ENCODE measurements at regions of chr1 and their contacts with region 1.

Region 1: DNA sequence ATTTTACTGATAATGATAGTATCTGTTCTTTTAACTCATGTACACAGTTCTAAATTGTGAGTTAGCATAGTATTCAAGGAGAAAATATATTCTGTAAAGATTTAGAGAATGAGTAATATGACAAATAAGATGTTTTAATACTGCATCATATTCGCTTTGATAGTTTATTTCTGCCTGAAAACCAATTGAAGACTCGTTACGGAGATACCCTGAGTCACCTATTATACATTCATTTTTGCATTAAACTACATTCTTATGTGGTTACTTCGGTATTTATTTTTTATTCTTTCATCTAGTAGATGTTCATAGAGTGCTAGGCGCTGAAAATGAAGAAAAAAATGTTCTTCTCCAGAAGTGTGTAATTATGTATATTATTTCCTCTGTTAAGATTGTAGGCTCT is 5.3 kb downstream of the UHMK1 start:
- DNase-seq: no peak
- H3K4me3 ChIP-seq: no peak overlapping the region
- H3K27ac ChIP-seq: no peak overlapping the region
- H3K4me1 ChIP-seq: 0 out of 2 replicates have a peak, but pooled peaks cover 6% of the 10 kb centered on the region
- H3K27me3 ChIP-seq: no peaks in the 10 kb centered on the region
- CTCF ChIP-seq: no peak

Region 2: DNA sequence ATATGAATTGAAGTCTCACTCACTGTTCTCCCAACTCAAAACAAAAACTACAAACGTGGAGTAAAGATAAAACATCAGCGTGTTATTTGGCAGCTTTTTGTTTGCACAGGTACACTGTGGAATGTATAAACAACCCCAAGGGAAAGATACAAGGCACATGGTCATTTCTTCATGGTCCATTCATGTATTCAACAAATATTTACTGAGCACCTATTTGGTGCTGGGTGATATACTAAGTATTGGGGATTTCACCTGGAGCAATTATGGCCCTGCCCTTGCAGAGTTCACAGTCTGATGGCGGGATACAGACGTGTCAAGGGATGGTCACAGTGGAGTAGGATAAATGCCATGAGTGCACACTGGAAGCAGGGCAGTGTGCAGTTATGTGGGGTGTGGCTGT is 262.4 kb before region 1 on chr1:
- CTCF ChIA-PET with region 1: no interaction called
- POLR2A ChIA-PET with region 1: no interaction called
- intact Hi-C with region 1: no loop called
- DNase-seq: no peak
- H3K4me3 ChIP-seq: no peak overlapping the region
- H3K27ac ChIP-seq: no peak overlapping the region
- H3K4me1 ChIP-seq: no peaks in the 10 kb centered on the region
- H3K27me3 ChIP-seq: no peaks in the 10 kb centered on the region
- CTCF ChIP-seq: no peak

Region 3: GRCh38 chr1:162265983-162266382 is 236.9 kb before region 1 on chr1:
- CTCF ChIA-PET with region 1: no interaction called
- POLR2A ChIA-PET with region 1: no interaction called
- intact Hi-C with region 1: no loop called
- DNase-seq: no peak
- H3K4me3 ChIP-seq: no peak overlapping the region
- H3K27ac ChIP-seq: no peak overlapping the region
- H3K4me1 ChIP-seq: no peaks in the 10 kb centered on the region
- H3K27me3 ChIP-seq: no peaks in the 10 kb centered on the region
- CTCF ChIP-seq: no peak

Region 4: DNA sequence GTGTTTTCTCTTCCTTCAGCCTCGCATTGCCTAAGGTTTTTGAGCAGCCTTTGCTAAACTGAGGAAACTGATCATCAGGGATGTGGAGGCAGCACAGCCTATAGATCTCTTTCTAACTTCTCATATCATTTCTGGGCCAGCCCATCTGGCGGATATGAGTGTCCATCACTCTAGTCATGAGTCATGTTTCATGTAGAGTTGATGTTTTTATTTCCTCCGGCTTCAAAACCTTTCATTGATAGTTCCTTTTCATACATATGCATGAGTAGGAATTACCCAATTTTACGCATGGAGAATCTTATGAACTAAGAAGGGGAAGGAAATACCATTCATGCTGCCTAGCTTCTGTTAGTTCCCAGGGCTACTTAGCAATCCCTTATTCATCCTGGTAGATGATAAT is 192.6 kb before region 1 on chr1:
- CTCF ChIA-PET with region 1: no interaction called
- POLR2A ChIA-PET with region 1: no interaction called
- intact Hi-C with region 1: no loop called
- DNase-seq: no peak
- H3K4me3 ChIP-seq: no peak overlapping the region
- H3K27ac ChIP-seq: no peak overlapping the region
- H3K4me1 ChIP-seq: no peaks in the 10 kb centered on the region
- H3K27me3 ChIP-seq: no peaks in the 10 kb centered on the region
- CTCF ChIP-seq: no peak

Region 5: DNA sequence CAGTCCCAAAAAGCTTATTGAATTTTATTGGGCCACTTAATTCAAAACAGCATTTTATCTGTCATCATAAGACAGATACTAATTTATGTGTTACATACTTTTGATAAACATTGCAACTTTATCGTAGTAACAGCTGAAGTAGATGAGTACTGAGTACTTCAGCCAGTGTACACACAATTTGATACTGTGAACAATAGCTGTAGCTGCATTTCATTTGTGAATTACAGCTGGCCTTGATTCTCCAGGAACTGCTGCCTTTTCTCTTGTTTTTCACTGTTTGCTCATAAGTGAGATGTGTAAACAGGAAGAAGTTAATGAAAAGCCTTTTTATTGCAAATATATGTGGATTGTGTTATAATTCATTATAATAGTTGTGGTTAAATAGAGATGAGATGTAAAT is 68.8 kb after region 1 on chr1:
- CTCF ChIA-PET with region 1: no interaction called
- POLR2A ChIA-PET with region 1: no interaction called
- intact Hi-C with region 1: loop called (anchors 5 kb)
- DNase-seq: no peak
- H3K4me3 ChIP-seq: no peak overlapping the region
- H3K27ac ChIP-seq: no peak overlapping the region
- H3K4me1 ChIP-seq: no peaks in the 10 kb centered on the region
- H3K27me3 ChIP-seq: no peaks in the 10 kb centered on the region
- CTCF ChIP-seq: no peak

Region 6: DNA sequence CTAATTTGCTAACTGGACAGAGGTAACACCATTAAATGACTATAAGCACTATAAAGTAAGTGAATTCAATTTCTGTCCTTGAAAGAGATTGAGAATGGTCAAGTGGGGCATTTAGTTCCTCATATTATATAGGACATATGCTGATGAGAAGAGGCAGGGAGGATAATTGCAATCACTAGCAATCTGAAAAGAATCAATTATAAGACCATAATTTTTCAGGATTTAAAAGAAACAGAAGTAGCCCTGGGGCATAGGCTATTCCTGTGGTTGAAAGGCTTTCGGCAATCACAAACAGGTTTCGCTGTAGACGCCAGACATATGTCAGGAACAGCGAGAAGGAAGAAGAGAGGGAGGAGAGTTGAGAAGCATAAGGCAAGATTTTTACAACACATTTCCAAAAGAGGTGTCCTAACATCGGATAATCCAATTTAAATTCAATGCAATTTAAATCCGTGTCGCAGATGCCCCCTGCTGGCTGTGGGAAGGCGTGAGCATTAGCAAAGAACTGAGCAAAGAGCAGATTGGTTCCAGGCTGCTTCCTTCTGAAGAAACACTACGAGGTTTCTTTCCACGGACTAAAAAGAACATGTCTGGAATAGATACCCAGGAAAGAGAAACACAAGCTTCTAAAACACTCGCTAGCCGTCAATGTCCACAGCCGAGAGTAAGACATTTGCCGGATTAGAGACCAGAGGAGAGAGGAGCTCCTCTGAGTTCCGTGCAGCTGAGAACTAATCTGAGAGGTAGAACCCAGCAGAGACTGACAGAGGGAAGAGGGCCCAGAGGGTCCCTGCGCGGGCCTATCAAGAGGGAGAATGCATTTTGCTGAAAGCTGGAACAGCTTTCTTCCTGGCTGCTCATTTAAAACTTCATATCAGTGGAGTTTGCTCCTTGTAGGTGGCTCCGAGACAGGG is 671.9 kb after region 1 on chr1:
- CTCF ChIA-PET with region 1: no interaction called
- POLR2A ChIA-PET with region 1: no interaction called
- intact Hi-C with region 1: no loop called
- DNase-seq: peak; percentile 32 to 40
- H3K4me3 ChIP-seq: peak overlapping the region; percentile 34; the same call in 1 of the 2 replicates
- H3K27ac ChIP-seq: no peak overlapping the region
- H3K4me1 ChIP-seq: no peaks in the 10 kb centered on the region
- H3K27me3 ChIP-seq: no peaks in the 10 kb centered on the region
- CTCF ChIP-seq: peak; percentile 91

Measured in PC-9 (cell line).